B cell (primary cell): ENCODE measurements at regions of chr14 and their contacts with region 1.

Region 1: GRCh38 chr14:50231475-50232275 is at the start of gene SOS2:
- DNase-seq: peak; percentile 93
- ATAC-seq: peak; percentile 88
- H3K4me3 ChIP-seq: peak within 1 kb of the TSS; percentile 76 to 94 (median 87)
- H3K4me3 Mint-ChIP-seq: peak within 1 kb of the TSS; percentile 95
- H3K27ac ChIP-seq: peak within 1 kb of the TSS; percentile 83 to 88
- H3K27ac Mint-ChIP-seq: peak within 1 kb of the TSS; percentile 97
- H3K4me1 ChIP-seq: peaks cover 14 to 17% of the 10 kb centered on the region in 2 donors
- H3K4me1 Mint-ChIP-seq: peaks cover 30% of the 10 kb centered on the region
- H3K27me3 ChIP-seq: no peaks in the 10 kb centered on the region
- H3K27me3 Mint-ChIP-seq: no peaks in the 10 kb centered on the region
- CTCF ChIP-seq: no peak
- total RNA-seq, gene SOS2: 51.0 and 55.3 TPM in 2 replicates

Region 2: GRCh38 chr14:49598485-49599300 is 633.0 kb before region 1 on chr14 and contains the start of gene LRR1:
- CTCF ChIA-PET with region 1: no interaction called
- POLR2A ChIA-PET with region 1: no interaction called
- intact Hi-C with region 1: loop called (anchors 5 kb)
- DNase-seq: peak; percentile 95
- ATAC-seq: peak; percentile 73
- H3K4me3 ChIP-seq: peak within 1 kb of the TSS; percentile 75 to 94 (median 80)
- H3K4me3 Mint-ChIP-seq: peak within 1 kb of the TSS; percentile 99
- H3K27ac ChIP-seq: peak within 1 kb of the TSS; percentile 92 to 97
- H3K27ac Mint-ChIP-seq: peak within 1 kb of the TSS; percentile 98
- H3K4me1 ChIP-seq: peaks cover 33 to 42% of the 10 kb centered on the region in 2 donors
- H3K4me1 Mint-ChIP-seq: peaks cover 55% of the 10 kb centered on the region
- H3K27me3 ChIP-seq: no peaks in the 10 kb centered on the region
- H3K27me3 Mint-ChIP-seq: no peaks in the 10 kb centered on the region
- CTCF ChIP-seq: no peak
- total RNA-seq, gene LRR1: 10.3 and 13.0 TPM in 2 replicates

Region 3: GRCh38 chr14:49767562-49768300 is 463.9 kb before region 1 on chr14 and contains the start of gene KLHDC2:
- CTCF ChIA-PET with region 1: no interaction called
- POLR2A ChIA-PET with region 1: no interaction called
- intact Hi-C with region 1: loop called (anchors 2 kb)
- DNase-seq: peak; percentile 93
- ATAC-seq: peak; percentile 86
- H3K4me3 ChIP-seq: peak within 1 kb of the TSS; percentile 74 to 97 (median 76)
- H3K4me3 Mint-ChIP-seq: peak within 1 kb of the TSS; percentile 98
- H3K27ac ChIP-seq: peak within 1 kb of the TSS; percentile 91 to 97
- H3K27ac Mint-ChIP-seq: peak within 1 kb of the TSS; percentile 99
- H3K4me1 ChIP-seq: peaks cover 22 to 29% of the 10 kb centered on the region in 2 donors
- H3K4me1 Mint-ChIP-seq: peaks cover 31% of the 10 kb centered on the region
- H3K27me3 ChIP-seq: no peaks in the 10 kb centered on the region
- H3K27me3 Mint-ChIP-seq: no peaks in the 10 kb centered on the region
- CTCF ChIP-seq: peak; percentile 40
- total RNA-seq, gene KLHDC2: 60.5 and 65.3 TPM in 2 replicates

Region 4: DNA sequence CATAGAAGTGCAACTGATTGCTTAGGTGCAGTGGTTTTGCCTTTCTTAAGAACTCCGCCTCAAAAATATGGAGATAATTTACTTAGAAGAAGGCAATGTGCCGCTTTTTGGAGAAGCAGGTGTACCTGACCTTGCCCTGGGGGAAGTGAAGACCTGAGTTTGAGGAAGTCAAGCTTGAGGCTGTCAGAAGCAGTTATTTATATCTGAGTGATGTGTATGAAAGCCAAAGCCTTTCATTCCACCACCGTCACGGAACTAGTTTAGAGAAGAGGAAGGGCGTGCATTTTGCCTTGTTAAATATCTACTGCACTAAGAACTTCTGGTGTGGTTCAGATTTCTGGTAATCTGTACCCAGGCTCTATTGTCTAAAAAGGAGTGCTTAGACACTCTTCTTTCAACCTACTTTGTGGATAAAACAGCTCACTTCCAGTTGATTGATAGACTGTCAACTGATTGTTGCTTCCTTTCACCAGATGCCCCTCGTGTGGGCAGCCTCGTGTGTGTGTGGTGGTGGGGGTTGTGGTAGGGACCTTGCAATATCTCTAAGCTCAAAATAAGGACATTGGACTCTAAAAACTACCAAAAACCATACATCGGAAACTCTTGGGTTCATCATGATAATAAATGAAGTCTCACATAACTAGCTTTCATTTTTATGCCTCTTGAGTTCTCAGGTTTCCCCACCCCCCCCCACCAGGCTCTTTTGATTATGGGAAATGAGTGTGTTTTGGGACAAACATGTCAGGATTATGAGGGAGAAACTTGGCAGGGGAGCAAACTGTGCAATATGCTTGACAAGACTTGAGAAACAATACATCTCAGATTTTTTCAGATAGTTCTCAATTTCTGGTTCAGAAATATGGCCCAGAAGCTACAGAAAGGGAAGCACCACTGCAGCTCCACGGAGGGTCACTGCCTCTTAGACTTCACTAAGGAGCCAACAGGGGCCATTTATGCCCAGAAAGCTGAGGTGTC is 260.2 kb before region 1 on chr14:
- CTCF ChIA-PET with region 1: no interaction called
- POLR2A ChIA-PET with region 1: no interaction called
- intact Hi-C with region 1: loop called (anchors 1 kb)
- DNase-seq: peak; percentile 92
- ATAC-seq: peak; percentile 85
- H3K4me3 ChIP-seq: peak overlapping the region in 2 of 5 experiments; percentile 30 to 32
- H3K4me3 Mint-ChIP-seq: peak overlapping the region; percentile 55
- H3K27ac ChIP-seq: peak overlapping the region; percentile 98 to 99
- H3K27ac Mint-ChIP-seq: peak overlapping the region; percentile 97
- H3K4me1 ChIP-seq: peaks cover 57 to 70% of the 10 kb centered on the region in 2 donors
- H3K4me1 Mint-ChIP-seq: peaks cover 62% of the 10 kb centered on the region
- H3K27me3 ChIP-seq: no peaks in the 10 kb centered on the region
- H3K27me3 Mint-ChIP-seq: no peaks in the 10 kb centered on the region
- CTCF ChIP-seq: no peak

Region 5: GRCh38 chr14:50109342-50109741 is 122.3 kb before region 1 on chr14:
- CTCF ChIA-PET with region 1: no interaction called
- POLR2A ChIA-PET with region 1: no interaction called
- intact Hi-C with region 1: no loop called
- DNase-seq: no peak
- ATAC-seq: no peak
- H3K4me3 ChIP-seq: no peak overlapping the region
- H3K4me3 Mint-ChIP-seq: no peak overlapping the region
- H3K27ac ChIP-seq: peak overlapping the region in 1 of 2 donors; percentile 85
- H3K27ac Mint-ChIP-seq: no peak overlapping the region
- H3K4me1 ChIP-seq: peaks cover 28 to 34% of the 10 kb centered on the region in 2 donors
- H3K4me1 Mint-ChIP-seq: peaks cover 40% of the 10 kb centered on the region
- H3K27me3 ChIP-seq: no peaks in the 10 kb centered on the region
- H3K27me3 Mint-ChIP-seq: no peaks in the 10 kb centered on the region
- CTCF ChIP-seq: no peak

Region 6: DNA sequence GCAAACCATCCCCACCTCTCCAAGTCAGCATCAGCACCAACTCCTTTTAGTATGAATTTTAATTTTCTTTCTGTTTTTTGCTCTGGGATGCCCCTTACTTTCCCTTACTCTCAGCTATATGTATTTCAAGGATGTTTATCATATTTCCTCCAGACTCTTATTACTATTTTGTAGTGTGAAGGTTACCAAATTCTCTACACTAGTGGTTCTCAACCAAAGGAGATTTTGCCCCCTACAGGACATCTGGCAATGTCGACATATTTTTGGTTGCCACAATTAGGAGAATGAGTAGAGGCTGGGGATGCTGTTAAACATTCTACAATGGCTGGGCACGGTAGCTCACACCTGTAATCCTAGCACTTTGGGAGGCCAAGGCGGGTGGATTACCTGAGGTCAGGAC is 28.8 kb after region 1 on chr14:
- CTCF ChIA-PET with region 1: no interaction called
- POLR2A ChIA-PET with region 1: no interaction called
- intact Hi-C with region 1: loop called (anchors 1 kb)
- DNase-seq: peak; percentile 46
- ATAC-seq: peak; percentile 61
- H3K4me3 ChIP-seq: no peak overlapping the region
- H3K4me3 Mint-ChIP-seq: no peak overlapping the region
- H3K27ac ChIP-seq: no peak overlapping the region
- H3K27ac Mint-ChIP-seq: no peak overlapping the region
- H3K4me1 ChIP-seq: no peaks in the 10 kb centered on the region
- H3K4me1 Mint-ChIP-seq: peaks cover 3% of the 10 kb centered on the region
- H3K27me3 ChIP-seq: no peaks in the 10 kb centered on the region
- H3K27me3 Mint-ChIP-seq: no peaks in the 10 kb centered on the region
- CTCF ChIP-seq: peak; percentile 67

Region 7: DNA sequence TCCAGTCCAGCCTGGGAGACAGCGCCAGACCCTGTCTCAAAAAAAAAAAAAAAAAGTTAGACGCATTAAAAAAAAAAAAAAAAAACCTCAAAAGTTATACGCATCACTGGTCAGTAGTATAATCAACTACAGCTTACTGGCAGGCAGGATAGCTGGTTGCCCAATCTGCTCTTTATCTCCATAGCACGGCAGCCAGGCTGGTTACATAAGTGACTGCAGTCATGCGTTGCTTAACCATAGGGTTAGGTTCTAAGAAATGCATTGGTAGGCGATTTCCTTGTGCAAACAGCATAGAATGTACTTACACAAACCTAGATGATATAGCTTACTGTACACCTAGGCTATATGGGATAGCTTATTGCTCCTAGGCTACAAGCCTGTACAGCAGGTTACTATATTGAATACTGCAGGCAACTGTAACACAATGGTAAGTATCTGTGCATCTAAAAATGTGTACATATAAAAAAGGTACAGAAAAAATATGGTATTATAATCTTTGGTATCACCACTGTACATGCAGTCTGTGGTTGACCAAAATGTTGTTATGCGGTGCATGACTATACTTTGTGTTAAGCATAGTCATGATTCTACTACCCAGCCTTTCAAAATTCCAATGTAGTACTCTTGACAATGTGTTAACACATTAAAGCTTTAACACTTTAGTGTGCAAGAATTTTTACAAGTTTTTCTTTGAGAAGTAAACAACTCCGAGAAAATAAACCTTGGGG is 72.2 kb after region 1 on chr14:
- CTCF ChIA-PET with region 1: no interaction called
- POLR2A ChIA-PET with region 1: no interaction called
- intact Hi-C with region 1: no loop called
- DNase-seq: no peak
- ATAC-seq: no peak
- H3K4me3 ChIP-seq: no peak overlapping the region
- H3K4me3 Mint-ChIP-seq: no peak overlapping the region
- H3K27ac ChIP-seq: no peak overlapping the region
- H3K27ac Mint-ChIP-seq: no peak overlapping the region
- H3K4me1 ChIP-seq: no peaks in the 10 kb centered on the region
- H3K4me1 Mint-ChIP-seq: no peaks in the 10 kb centered on the region
- H3K27me3 ChIP-seq: no peaks in the 10 kb centered on the region
- H3K27me3 Mint-ChIP-seq: no peaks in the 10 kb centered on the region
- CTCF ChIP-seq: no peak

Region 8: DNA sequence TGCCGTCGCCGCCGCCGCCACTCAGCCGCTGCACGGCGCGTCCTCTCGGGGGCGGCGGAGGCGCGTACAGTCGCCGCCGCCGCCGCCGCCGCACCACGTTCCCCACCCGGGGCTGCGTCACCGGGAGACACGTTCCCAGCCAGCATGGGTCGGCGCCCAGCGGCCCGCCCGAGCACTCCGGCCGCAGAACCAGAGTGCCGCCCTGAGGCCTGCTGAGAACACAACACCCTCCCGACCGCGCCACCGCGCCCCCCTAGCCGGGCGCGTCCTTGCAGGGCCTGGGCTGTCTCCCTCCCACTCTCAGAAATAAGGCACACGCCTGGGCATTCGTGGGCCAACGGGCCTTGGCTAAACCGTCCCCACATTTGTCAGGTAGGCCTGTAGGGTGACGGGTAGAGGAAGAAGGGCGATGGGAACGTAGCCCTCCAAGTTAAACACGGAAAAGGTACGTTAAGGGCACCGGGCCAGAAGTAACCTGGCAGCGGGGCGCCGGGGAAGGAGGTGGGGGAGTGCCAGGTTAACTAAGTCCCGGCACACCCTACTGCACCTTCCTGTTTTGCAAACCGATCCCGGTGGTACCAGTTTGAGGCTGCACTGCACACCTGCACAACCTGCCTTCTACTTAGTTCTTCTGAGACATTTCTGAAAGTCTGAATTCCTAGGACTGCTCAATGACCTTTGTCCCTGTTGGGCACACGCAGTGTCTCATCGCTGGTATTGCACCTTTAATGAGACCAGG is 301.0 kb after region 1 on chr14 and contains the start of gene MAP4K5:
- CTCF ChIA-PET with region 1: no interaction called
- POLR2A ChIA-PET with region 1: no interaction called
- intact Hi-C with region 1: loop called (anchors 2 kb)
- DNase-seq: peak; percentile 94
- ATAC-seq: peak; percentile 91
- H3K4me3 ChIP-seq: peak within 1 kb of the TSS; percentile 62 to 89 (median 76)
- H3K4me3 Mint-ChIP-seq: peak within 1 kb of the TSS; percentile 93
- H3K27ac ChIP-seq: peak within 1 kb of the TSS; percentile 83 to 88
- H3K27ac Mint-ChIP-seq: peak within 1 kb of the TSS; percentile 95
- H3K4me1 ChIP-seq: peaks cover 18 to 37% of the 10 kb centered on the region in 2 donors
- H3K4me1 Mint-ChIP-seq: peaks cover 47% of the 10 kb centered on the region
- H3K27me3 ChIP-seq: no peaks in the 10 kb centered on the region
- H3K27me3 Mint-ChIP-seq: no peaks in the 10 kb centered on the region
- CTCF ChIP-seq: peak; percentile 79
- total RNA-seq, gene MAP4K5: 58.2 and 60.0 TPM in 2 replicates